ENCODE measurements at regions of chr2 and their contacts with region 1.

Region 1: DNA sequence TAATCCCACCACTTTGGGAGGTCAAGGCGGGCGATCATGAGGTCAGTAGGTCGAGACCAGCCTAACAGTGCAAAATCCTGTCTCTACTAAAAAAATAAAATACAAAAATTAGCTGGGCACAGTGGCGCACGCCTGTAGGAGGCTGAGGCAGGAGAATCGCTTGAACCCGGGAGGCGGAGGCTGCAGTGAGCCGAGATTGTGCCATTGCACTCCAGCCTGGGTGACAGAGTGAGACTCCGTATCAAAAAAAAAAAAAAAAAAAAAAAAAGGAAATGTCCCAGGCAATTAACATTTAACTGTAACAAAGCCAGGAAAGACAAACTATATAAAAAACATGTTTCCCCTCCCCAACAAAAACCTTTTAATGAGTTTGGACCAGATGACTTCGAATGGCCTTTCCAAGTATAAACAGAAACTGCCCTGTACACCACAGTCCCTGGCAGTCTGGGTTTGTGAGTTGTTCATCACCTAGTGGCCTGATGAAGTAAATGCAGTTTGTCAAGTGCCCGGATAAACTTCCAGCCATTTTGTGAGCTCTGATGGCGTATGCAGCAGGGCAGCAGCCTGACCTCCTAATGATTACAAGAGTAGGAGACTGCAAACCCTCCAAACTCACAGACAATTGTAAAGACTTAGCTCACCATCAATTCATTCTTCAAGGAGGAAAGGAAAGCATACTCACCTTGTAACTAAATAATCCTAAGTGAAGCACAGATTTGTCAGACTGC is 16.6 kb upstream of the PCBP1 start:
- DNase-seq: peak in 9 of 10 donors; percentile 53 to 89 (median 66)
- H3K4me3 ChIP-seq: peak overlapping the region in 35 of 59 donors; percentile 0 to 51 (median 22)
- H3K27ac ChIP-seq: peak overlapping the region; percentile 72 to 99 (median 92)
- H3K27me3 ChIP-seq: no peaks in the 10 kb centered on the region
- CTCF ChIP-seq: peak; percentile 73 to 97 (median 85)

Region 2: DNA sequence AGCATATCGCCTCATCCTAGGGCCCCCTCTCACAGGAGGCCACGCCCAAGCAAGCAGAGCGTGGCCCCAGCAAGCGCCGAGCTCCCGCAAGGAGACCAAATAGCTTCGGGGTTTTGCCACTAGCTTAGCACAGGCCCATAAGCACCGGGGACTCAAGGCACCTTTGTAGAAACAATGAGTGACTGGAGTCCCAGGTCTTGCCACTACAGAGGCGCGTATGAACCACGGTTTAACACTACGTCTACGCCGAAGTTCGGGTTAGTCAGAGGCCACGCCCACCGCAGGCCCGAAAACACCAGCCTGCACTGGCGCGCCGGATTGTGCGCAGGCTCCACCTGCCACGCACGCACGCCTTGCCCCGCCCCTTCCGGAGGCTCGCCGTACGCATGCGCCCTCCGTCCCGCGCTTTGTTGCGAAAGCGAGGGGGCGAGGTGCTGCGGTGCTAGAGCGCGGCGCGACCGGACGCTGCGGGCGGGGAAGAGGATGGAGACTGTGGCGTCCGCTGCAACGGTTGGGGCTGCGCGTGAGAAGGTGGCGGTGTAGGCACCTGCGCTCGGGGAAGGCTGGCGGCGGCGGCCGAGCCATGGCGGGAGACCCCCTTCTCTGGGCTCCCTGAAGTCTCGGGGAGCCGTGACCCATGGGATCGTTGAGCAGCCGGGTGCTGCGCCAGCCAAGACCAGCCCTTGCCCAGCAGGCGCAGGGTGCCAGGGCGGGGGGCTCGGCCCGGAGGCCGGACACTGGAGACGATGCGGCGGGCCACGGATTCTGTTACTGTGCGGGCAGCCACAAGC is 241.3 kb before region 1 on chr2 and contains the start of gene GMCL1:
- intact Hi-C with region 1: loop called in 1 of 2 experiments (anchors 5 kb)
- DNase-seq: peak; percentile 93 to 97 (median 96)
- H3K4me3 ChIP-seq: peak within 1 kb of the TSS; percentile 78 to 100 (median 98)
- H3K27ac ChIP-seq: peak within 1 kb of the TSS; percentile 36 to 98 (median 93)
- H3K27me3 ChIP-seq: no peaks in the 10 kb centered on the region
- CTCF ChIP-seq: peak in 43 of 56 donors; percentile 3 to 70 (median 45)
- total RNA-seq, gene GMCL1: 11.5 to 39.4 (median 22.1) TPM

Region 3: DNA sequence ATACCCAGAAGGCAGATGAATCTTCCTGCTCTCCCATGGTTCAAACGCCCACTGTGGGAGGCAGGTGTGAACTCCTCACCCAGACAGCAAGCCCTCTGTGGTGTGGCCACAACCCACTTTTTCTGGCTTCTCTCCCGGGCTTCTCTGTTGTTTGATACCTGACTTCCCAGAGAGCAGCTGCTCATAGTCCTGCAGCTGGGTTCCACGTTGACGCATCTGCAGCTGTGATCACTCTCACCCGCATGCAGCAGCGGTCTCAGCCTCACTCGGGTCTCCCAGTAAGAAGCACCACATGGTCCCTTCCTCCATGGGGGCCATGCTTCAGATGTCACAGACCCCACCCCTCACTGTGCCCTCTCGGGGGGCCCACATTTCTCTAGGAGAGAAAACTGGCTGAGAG is 112.7 kb before region 1 on chr2:
- intact Hi-C with region 1: loop called in 1 of 2 experiments (anchors 2 kb)
- DNase-seq: no peak
- H3K4me3 ChIP-seq: no peak overlapping the region
- H3K27ac ChIP-seq: no peak overlapping the region
- H3K27me3 ChIP-seq: no peaks in the 10 kb centered on the region
- CTCF ChIP-seq: no peak

Region 4: DNA sequence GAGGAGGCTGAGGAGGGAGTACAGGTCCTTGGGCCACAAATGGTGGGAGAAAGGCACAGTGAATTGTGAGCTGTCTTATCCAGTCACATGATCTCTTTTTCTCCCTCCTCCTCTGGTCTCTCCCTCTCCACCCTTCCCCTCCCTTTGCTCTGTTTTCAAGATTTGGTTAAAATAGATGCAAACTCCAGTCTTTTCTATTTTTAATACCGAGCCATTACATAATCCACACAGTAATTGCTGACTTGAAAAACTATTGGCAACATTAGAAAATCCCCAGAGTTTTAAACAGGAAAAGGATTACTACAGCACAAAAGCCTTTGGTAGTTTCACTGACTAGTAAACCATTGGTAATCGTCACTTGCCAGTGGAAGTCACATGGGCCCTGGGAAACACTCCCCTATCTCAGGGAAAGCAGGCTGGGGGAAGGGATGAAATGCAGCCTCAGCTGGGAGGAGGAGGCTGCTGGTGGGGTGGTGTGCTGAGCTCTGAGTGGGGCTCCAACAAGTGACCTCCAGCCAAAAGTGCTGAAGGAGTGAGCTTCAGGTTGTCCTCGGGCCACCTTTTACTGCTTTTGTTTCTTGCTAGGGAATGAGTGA is 40.8 kb before region 1 on chr2:
- intact Hi-C with region 1: loop called in 1 of 2 experiments (anchors 5 kb)
- DNase-seq: peak in 7 of 10 donors; percentile 37 to 65 (median 59)
- H3K4me3 ChIP-seq: peak overlapping the region in 7 of 59 donors; percentile 3 to 17 (median 10)
- H3K27ac ChIP-seq: peak overlapping the region; percentile 18 to 94 (median 84)
- H3K27me3 ChIP-seq: no peaks in the 10 kb centered on the region
- CTCF ChIP-seq: no peak

Region 5: GRCh38 chr2:70190418-70191243 is 119.9 kb after region 1 on chr2 and contains the start of gene C2orf42:
- intact Hi-C with region 1: loop called in 1 of 2 experiments (anchors 2 kb)
- DNase-seq: peak; percentile 93 to 98 (median 96)
- H3K4me3 ChIP-seq: peak within 1 kb of the TSS; percentile 45 to 99 (median 86)
- H3K27ac ChIP-seq: peak within 1 kb of the TSS; percentile 87 to 99 (median 96)
- H3K27me3 ChIP-seq: no peaks in the 10 kb centered on the region
- CTCF ChIP-seq: peak in 30 of 56 donors; percentile 7 to 51 (median 22)
- total RNA-seq, gene C2orf42: 20.6 to 44.6 (median 32.0) TPM